ENCODE measurements at regions of chr19 and their contacts with region 1.

Region 1: GRCh38 chr19:46611776-46612175 is 10.6 kb downstream of the CALM3 start:
- DNase-seq: no peak
- H3K4me3 ChIP-seq: no peak overlapping the region
- H3K27ac ChIP-seq: no peak overlapping the region
- H3K4me1 ChIP-seq: no peaks in the 10 kb centered on the region
- H3K27me3 ChIP-seq: no peaks in the 10 kb centered on the region
- CTCF ChIP-seq: no peak
- POLR2A ChIP-seq: no peak

Region 2: DNA sequence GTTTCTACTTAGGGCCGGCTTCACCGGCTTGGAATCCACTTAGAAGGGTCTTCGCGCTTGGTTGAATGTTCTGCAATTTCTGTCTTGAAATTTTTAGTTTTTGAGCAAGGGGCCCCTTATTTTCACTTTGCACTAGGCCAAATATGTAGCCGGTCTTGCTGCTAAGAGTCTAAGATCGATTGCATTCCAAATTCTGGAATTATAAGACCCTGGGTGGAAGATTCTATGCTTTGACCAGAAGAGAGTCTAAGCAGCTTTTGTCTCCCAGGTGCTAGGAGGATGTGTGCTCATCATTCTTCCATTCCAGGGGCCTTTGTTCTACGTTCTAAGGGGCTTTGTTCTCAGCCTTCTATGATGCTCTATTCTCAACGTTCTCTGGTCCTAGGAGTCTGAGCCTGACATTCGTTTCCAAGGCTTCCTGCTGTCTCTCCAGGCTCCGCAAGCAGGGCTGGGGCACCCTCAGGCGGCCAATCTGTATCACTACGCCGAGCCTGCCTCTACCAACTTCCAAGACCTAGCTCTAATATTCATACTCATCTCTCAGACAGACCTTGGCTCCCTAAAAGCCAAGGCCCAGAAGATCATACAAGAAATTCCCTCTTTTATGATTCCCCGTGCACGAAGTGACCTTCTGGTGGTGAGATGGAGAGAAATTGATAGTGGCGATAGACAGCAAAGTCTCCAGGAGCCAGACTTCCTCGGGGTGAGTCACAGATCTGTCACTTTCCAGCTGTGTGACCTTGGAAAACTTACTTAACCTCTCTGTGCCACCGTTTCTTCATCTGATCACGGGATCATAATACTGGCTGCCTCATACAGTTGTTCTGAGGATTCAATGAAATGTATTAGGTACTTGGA is 50.2 kb after region 1 on chr19:
- intact Hi-C with region 1: loop called (anchors 2 kb)
- DNase-seq: peak; percentile 92
- H3K4me3 ChIP-seq: peak overlapping the region; percentile 36 to 37
- H3K27ac ChIP-seq: peak overlapping the region; percentile 60 to 85
- H3K4me1 ChIP-seq: peaks cover 22% of the 10 kb centered on the region
- H3K27me3 ChIP-seq: no peaks in the 10 kb centered on the region
- CTCF ChIP-seq: peak; percentile 73 to 79 (median 76)
- POLR2A ChIP-seq: no peak

Measured in testis (tissue), 5 donors.